GM18951 (cell line): ENCODE measurements at regions of chr1 and their contacts with region 1.

Region 1: DNA sequence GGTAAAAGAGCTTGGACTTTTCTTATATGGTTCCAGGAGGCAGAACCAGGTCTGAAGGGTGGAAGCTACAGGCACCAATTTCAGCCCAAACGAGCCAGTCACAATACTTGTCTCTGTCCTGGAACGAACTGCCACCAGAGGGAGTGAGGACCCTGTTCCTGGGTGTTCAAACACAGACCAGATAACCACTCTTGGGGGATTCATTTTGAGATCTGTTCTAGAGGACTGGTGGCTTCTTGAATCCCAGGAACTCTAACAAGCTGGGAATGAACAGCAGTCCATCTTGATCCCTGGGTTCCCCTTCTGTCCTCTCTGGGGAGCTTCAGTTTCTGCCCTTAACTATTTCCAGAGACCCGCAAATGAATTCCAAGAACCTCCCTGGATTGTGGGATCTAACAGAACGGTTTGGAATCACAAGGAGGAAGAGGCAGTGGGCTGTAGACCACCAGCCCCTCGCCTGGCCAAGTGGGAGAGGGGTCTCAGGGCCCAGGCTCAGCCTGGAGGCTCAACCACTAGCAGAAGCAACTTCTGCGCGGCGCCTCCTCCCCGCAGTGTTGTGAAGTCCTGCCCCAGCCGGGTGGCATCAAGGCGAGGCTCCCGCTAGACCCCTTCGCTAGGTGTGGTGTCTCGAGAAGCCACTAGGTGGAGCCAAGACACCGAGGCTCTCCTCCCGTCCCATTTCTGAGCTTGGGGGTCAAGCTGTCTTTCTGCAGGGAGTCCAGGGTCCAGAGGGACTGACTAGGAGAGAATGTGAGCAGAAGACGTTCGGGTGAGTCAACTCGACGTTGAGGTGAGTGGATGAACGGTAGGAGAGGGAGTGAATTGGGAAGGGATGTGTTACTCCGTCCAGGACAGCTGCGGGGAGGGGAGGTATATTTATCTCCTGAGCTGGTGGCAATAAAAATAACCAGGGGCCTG is 12.1 kb upstream of the NES start:
- POLR2A ChIP-seq: no peak

Region 2: DNA sequence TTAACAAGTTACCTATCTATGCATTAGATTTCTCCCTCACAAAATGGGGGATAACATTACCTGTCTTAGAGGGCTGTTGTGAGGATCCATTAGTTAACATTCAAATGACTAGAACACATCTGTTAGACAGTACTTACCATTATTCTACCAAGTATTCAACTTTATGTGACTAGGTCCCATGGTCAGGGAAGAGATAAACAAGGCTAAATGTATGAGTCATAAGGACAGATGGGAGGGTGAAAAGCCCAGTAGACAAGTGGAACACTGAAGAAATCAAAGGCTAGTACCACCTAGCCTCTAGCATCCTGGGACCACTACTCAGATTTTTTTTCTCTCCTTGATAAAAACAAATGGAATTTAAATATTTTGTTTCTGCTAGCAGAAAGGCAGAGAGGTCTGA is 381.2 kb before region 1 on chr1:
- in situ Hi-C with region 1: no loop called
- POLR2A ChIP-seq: no peak

Region 3: DNA sequence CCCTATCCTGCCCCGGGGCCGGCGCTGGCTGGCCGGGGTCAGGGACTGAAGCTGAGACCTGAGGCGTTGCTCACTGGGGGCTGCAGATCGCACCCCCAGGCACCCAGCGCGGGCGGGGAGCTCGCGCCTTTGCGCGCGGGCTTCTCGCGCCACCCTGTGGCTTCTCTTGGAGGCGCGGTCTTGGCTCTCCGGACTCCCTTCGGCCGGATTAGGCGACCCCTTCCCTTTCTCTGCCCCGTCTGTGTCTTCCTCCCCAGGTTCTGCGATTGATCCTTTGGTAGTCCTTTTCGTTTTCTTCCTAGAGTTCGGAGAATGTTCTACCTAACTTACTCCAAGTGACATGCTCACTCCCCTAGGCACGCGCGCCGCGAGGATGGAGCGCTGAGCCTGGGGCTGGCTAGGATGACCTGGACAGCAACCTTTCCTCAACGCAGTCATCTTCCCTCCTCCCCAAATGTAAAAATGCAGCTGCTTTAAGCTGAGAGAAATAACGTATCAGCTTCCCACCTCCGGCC is 170.9 kb after region 1 on chr1:
- in situ Hi-C with region 1: loop called (anchors 25 kb)
- POLR2A ChIP-seq: no peak